Heart left ventricle (tissue), 16 donors: ENCODE measurements at regions of chr4 and their contacts with region 1.

Region 1: DNA sequence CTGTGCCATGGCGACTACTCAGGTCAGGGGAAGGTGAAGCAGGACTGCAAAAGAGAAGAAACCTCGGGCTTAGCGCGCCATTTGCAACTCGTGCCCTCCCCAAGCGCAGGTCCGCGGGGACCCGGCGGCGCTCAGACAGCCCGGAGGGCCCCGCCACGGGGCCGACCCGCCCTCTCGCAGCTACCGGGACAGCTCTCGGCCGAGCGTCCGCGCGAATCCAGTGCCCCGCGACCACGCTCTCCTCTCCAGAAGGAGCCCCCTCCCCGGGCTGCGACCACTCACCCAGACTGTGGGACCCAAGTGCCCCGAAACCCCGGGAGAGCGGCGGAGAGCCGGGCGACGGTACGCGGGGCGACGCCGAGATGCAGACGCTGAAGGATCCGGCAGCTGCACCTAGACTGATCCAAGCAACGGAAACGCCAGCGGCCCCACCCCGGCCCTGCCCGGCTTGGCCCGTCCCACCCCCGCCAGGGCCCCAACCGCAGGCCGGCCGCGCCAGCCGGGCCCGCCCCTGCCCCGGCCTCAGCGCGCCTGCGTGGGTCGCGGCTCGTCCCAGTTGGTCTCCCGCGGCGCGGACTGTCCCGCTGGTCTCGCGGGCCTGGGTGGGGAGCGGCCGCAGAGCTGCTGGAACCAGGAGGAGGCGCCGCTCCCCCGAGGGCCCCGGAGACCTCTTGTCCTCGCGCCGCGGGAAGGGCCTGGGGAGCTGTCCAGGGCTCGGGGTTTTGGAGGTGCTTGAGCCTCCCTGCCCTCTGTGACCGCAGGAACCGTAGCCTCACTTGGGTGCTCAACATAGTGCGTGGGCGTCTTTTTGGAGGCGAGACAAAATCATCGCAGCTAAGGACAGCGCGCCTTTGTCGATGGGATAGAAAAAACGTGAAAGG is at the start of gene ANXA5:
- DNase-seq: peak; percentile 90 to 96 (median 94)
- ATAC-seq: peak; percentile 91 to 99 (median 96)
- H3K4me3 ChIP-seq: peak within 1 kb of the TSS; percentile 80 to 99 (median 96)
- H3K27ac ChIP-seq: peak within 1 kb of the TSS; percentile 89 to 99 (median 98)
- H3K4me1 ChIP-seq: peaks cover 0 to 54% (median 32%) of the 10 kb centered on the region in 12 donors
- H3K27me3 ChIP-seq: no peaks in the 10 kb centered on the region
- CTCF ChIP-seq: peak in 11 of 12 donors; percentile 12 to 63 (median 44)
- POLR2A ChIP-seq: peak; percentile 12 to 71
- total RNA-seq, gene ANXA5: 108 to 283 (median 168) TPM

Region 2: DNA sequence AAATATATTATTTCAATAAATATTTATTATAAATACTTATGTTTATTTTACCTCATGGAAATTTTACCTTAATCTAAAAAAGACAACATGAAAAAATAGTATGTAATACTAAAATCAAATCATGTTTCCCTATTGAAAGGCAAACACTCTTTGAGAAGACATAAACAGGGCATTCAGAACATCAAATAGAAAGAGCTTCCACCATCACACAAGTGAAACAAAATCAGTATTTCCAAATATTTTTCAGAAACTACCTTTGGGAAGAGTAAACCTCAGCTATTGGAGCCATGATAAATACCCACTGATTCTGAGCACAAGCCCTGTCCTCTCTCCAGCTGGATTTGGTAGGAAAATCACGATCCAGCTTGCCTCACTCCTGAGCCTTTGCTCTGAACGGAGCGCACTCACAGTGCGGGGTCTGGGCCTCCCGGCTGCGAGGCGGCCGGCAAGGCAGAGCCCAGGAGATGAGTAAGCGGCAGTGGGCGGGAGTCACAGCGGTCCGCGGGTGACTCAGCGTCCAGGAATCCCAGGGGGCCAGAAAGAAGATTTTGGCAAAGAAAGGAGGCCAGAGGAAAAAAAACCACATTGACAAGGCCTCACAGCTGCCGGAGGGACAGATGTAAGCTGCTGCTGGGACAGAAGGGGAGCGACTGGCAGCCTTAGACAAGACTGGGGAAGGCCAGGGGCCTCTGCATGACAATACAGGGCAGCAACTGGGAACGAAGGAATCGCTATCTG is 14.6 kb after region 1 on chr4:
- intact Hi-C with region 1: loop called in 1 of 10 experiments (anchors 1 kb)
- DNase-seq: peak; percentile 86 to 94 (median 90)
- ATAC-seq: peak; percentile 94 to 100 (median 99)
- H3K4me3 ChIP-seq: peak overlapping the region in 10 of 12 donors; percentile 1 to 43 (median 23)
- H3K27ac ChIP-seq: peak overlapping the region; percentile 33 to 89 (median 68)
- H3K4me1 ChIP-seq: peaks cover 0 to 14% (median 10%) of the 10 kb centered on the region in 12 donors
- H3K27me3 ChIP-seq: no peaks in the 10 kb centered on the region
- CTCF ChIP-seq: no peak
- POLR2A ChIP-seq: peak in 1 of 2 donors; percentile 25

Region 3: GRCh38 chr4:121789960-121790829 is 93.4 kb after region 1 on chr4:
- intact Hi-C with region 1: loop called in 1 of 10 experiments (anchors 5 kb)
- DNase-seq: no peak
- ATAC-seq: no peak
- H3K4me3 ChIP-seq: no peak overlapping the region
- H3K27ac ChIP-seq: no peak overlapping the region
- H3K4me1 ChIP-seq: peaks cover 0 to 7% (median 0%) of the 10 kb centered on the region in 12 donors
- H3K27me3 ChIP-seq: peaks cover 0 to 35% (median 0%) of the 10 kb centered on the region in 9 donors
- CTCF ChIP-seq: no peak
- POLR2A ChIP-seq: no peak